PC-9 (cell line): ENCODE measurements at regions of chr4 and their contacts with region 1.

Region 1: GRCh38 chr4:150173432-150173861 is 95.2 kb downstream of the DCLK2 start:
- DNase-seq: no peak
- H3K4me3 ChIP-seq: no peak overlapping the region
- H3K27ac ChIP-seq: no peak overlapping the region
- H3K4me1 ChIP-seq: no peaks in the 10 kb centered on the region
- H3K27me3 ChIP-seq: no peaks in the 10 kb centered on the region
- CTCF ChIP-seq: no peak

Region 2: GRCh38 chr4:150150629-150151062 is 22.8 kb before region 1 on chr4:
- CTCF ChIA-PET with region 1: no interaction called
- POLR2A ChIA-PET with region 1: interaction called, 12 read pairs
- intact Hi-C with region 1: no loop called
- DNase-seq: no peak
- H3K4me3 ChIP-seq: no peak overlapping the region
- H3K27ac ChIP-seq: no peak overlapping the region
- H3K4me1 ChIP-seq: no peaks in the 10 kb centered on the region
- H3K27me3 ChIP-seq: no peaks in the 10 kb centered on the region
- CTCF ChIP-seq: no peak